Activated CD4-positive, alpha-beta memory T cell treated with anti-CD3 and anti-CD28 coated beads for 36 hours (primary cell): ENCODE measurements at regions of chr12 and their contacts with region 1.

Region 1: GRCh38 chr12:10153271-10154144 is 18.4 kb downstream of the OLR1 start:
- DNase-seq: peak; percentile 62
- H3K4me3 Mint-ChIP-seq: peak overlapping the region; percentile 81
- H3K27ac Mint-ChIP-seq: no peak overlapping the region
- H3K4me1 Mint-ChIP-seq: peaks cover 12% of the 10 kb centered on the region
- H3K27me3 Mint-ChIP-seq: peaks cover 26% of the 10 kb centered on the region

Region 2: GRCh38 chr12:10182354-10183061 is 29.0 kb after region 1 on chr12:
- CTCF ChIA-PET with region 1: interaction called, 19 read pairs
- POLR2A ChIA-PET with region 1: no interaction called
- intact Hi-C with region 1: no loop called
- DNase-seq: no peak
- H3K4me3 Mint-ChIP-seq: no peak overlapping the region
- H3K27ac Mint-ChIP-seq: no peak overlapping the region
- H3K4me1 Mint-ChIP-seq: peaks cover 5% of the 10 kb centered on the region
- H3K27me3 Mint-ChIP-seq: peaks cover 19% of the 10 kb centered on the region

Region 3: GRCh38 chr12:10196210-10196609 is 42.7 kb after region 1 on chr12:
- CTCF ChIA-PET with region 1: interaction called, 20 read pairs
- POLR2A ChIA-PET with region 1: no interaction called
- intact Hi-C with region 1: no loop called
- DNase-seq: no peak
- H3K4me3 Mint-ChIP-seq: no peak overlapping the region
- H3K27ac Mint-ChIP-seq: no peak overlapping the region
- H3K4me1 Mint-ChIP-seq: peaks cover 2% of the 10 kb centered on the region
- H3K27me3 Mint-ChIP-seq: peaks cover 19% of the 10 kb centered on the region

Region 4: GRCh38 chr12:10235761-10236631 is 82.5 kb after region 1 on chr12:
- CTCF ChIA-PET with region 1: interaction called, 10 read pairs
- POLR2A ChIA-PET with region 1: no interaction called
- intact Hi-C with region 1: no loop called
- DNase-seq: peak; percentile 47
- H3K4me3 Mint-ChIP-seq: no peak overlapping the region
- H3K27ac Mint-ChIP-seq: no peak overlapping the region
- H3K4me1 Mint-ChIP-seq: no peaks in the 10 kb centered on the region
- H3K27me3 Mint-ChIP-seq: peaks cover 3% of the 10 kb centered on the region

Region 5: GRCh38 chr12:10562306-10562933 is 408.9 kb after region 1 on chr12:
- CTCF ChIA-PET with region 1: interaction called, 3 read pairs
- POLR2A ChIA-PET with region 1: no interaction called
- intact Hi-C with region 1: loop called (anchors 1 kb)
- DNase-seq: no peak
- H3K4me3 Mint-ChIP-seq: no peak overlapping the region
- H3K27ac Mint-ChIP-seq: no peak overlapping the region
- H3K4me1 Mint-ChIP-seq: no peaks in the 10 kb centered on the region
- H3K27me3 Mint-ChIP-seq: peaks cover 26% of the 10 kb centered on the region